Left cardiac atrium (tissue), 4 donors: ENCODE measurements at regions of chr1 and their contacts with region 1.

Region 1: GRCh38 chr1:10615332-10615731 is 140.6 kb downstream of the PEX14 start:
- DNase-seq: no peak
- ATAC-seq: no peak

Region 2: DNA sequence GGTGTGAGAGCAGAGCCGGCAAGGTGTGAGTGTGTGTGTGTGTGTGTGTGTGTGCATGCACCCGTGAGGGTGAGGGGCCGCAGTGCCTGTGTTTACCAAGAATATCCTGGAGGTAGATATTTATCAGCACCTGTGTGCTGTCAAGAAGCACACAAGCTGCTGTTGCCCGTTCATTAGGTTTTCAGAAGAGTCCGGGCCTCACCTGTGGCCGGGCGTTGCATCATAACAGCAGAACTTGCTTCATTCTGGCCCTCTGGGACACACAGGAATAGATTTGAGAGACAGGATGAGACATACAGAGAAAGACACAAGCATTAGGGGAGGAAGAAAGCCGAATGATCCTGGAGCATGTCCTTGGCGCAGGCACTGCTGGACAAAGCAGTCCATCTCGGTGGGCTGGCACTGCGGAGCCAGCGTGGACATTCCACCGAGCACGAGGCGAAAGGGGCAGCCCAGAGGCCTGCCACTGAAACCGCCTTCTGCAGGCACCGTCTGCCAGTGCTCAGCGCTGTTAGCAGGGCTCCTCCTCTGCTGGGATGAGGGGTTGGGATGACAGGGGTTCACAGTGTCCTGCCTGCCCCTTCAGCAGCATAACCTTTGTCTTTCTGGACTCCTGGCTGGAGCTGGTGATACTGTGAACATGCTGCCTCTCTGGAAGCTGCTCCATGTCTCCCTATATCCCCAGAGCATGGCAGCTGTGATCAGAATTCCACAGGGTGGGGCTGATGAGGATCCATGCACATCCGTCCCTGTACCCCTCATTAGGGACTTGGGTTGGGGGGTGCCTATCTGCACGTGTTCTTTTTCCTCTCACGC is 59.5 kb before region 1 on chr1:
- intact Hi-C with region 1: loop called in 1 of 2 experiments (anchors 10 kb)
- DNase-seq: no peak
- ATAC-seq: peak; percentile 38 to 60